ENCODE measurements at regions of chr4 and their contacts with region 1.

Region 1: DNA sequence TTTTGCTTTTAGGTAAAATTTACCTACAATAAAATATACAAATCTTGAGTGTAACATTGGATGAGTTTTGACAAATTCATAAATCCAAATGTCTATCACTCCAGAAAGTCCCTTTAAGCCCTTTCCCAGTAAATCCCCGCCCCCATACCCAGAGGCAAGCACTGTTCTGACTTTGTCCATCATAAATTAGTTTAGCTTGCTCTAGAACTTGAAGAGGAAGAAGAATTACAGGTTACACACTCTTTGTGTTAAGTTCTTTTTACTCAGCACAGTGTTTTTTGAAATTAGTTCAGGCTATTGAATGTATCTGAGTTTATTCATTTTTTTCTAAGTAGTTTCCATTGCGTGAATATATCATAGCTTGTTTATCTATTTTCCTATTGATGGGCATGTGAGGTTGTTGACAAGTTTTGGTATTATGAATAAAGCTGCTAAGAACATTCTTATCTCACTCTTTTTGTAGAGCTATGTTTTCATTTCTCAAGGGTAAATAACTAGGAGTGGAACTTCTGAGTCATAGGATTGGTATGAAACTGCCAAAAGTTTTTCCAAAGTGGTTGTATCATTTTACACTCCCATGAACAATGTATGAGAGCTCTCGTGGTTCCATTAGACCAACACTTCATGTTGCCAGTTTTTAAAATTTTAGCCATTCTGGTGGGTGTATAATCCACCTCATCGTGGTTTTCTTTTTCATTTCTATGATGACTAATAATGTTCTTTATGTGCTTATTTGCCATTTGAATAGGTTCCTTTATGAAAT is 22.4 kb upstream of the HPSE start:
- DNase-seq: peak; percentile 95
- H3K4me3 ChIP-seq: no peak overlapping the region
- H3K27ac ChIP-seq: peak overlapping the region; percentile 92
- H3K4me1 ChIP-seq: peaks cover 27% of the 10 kb centered on the region
- H3K27me3 ChIP-seq: no peaks in the 10 kb centered on the region
- CTCF ChIP-seq: no peak
- POLR2A ChIP-seq: no peak

Region 2: GRCh38 chr4:83328521-83329187 is 28.4 kb before region 1 on chr4:
- CTCF ChIA-PET with region 1: interaction called, 6 read pairs
- POLR2A ChIA-PET with region 1: interaction called, 3 read pairs
- dilution Hi-C with region 1: no loop called
- intact Hi-C with region 1: loop called (anchors 1 kb)
- DNase-seq: peak; percentile 37
- H3K4me3 ChIP-seq: peak overlapping the region in 1 of 3 experiments; percentile 10
- H3K27ac ChIP-seq: peak overlapping the region; percentile 30
- H3K4me1 ChIP-seq: peaks cover 22% of the 10 kb centered on the region
- H3K27me3 ChIP-seq: no peaks in the 10 kb centered on the region
- CTCF ChIP-seq: peak in 1 of 2 donors; percentile 10
- POLR2A ChIP-seq: no peak

Region 3: DNA sequence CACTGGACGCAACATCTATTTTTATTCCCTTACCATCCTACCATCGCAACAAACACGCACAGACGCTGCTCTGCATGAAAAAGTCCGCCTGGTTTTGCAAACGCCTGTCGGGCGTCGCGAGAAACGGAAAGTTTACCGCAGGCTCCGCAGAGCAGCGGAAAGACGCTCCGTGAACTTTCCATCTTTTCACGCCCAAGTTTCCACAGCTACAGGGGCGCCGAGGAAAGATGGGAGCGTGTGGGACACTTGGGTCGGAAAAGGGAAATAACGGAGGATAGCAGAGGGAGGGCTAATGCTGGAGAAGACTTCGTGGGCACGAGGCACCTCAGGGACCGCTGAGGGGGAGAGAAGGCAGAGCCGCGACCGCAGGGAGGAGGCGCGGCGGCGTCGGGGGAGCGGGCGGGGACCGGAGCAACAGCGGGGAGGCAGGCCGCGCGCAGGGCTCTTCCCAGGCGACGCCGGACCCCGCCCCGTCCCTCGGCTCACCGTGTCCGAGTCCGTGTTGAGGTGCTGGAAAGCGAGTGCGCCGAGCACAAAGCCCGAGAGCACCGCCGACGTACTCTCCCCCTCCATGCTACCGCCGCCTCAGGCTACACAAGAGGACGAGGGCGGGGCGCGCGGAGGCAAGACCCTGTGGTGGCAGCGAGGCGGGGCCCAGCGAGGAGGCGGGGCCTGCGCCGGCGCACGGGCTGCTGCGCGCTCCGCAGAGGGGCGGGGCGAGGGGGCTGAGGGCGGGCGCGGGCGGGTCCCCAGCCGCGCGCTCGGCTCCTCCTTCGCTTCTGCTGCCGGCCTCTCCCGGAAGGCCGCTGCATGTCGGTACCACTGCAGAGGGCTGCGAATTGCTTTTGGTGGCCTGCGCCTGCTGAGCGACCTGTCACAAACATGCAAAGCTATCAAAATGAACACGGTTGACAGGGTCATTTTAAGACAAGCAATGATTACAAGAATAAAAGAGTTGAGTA is 127.7 kb after region 1 on chr4 and contains the start of gene ABRAXAS1:
- CTCF ChIA-PET with region 1: no interaction called
- POLR2A ChIA-PET with region 1: no interaction called
- dilution Hi-C with region 1: no loop called
- intact Hi-C with region 1: loop called (anchors 1 kb)
- DNase-seq: peak; percentile 96
- H3K4me3 ChIP-seq: peak within 1 kb of the TSS; percentile 62 to 85 (median 82)
- H3K27ac ChIP-seq: peak within 1 kb of the TSS; percentile 40
- H3K4me1 ChIP-seq: peaks cover 9% of the 10 kb centered on the region
- H3K27me3 ChIP-seq: no peaks in the 10 kb centered on the region
- CTCF ChIP-seq: no peak
- POLR2A ChIP-seq: peak; percentile 91
- total RNA-seq, gene ABRAXAS1: 14.0 and 16.7 TPM in 2 replicates

Region 4: GRCh38 chr4:83546786-83547185 is 189.7 kb after region 1 on chr4:
- CTCF ChIA-PET with region 1: no interaction called
- POLR2A ChIA-PET with region 1: no interaction called
- dilution Hi-C with region 1: no loop called
- intact Hi-C with region 1: no loop called
- DNase-seq: no peak
- H3K4me3 ChIP-seq: no peak overlapping the region
- H3K27ac ChIP-seq: no peak overlapping the region
- H3K4me1 ChIP-seq: peaks cover 9% of the 10 kb centered on the region
- H3K27me3 ChIP-seq: no peaks in the 10 kb centered on the region
- CTCF ChIP-seq: no peak
- POLR2A ChIP-seq: no peak

Region 5: GRCh38 chr4:83629945-83630721 is 273.1 kb after region 1 on chr4:
- CTCF ChIA-PET with region 1: no interaction called
- POLR2A ChIA-PET with region 1: no interaction called
- dilution Hi-C with region 1: no loop called
- intact Hi-C with region 1: loop called (anchors 5 kb)
- DNase-seq: peak; percentile 92
- H3K4me3 ChIP-seq: no peak overlapping the region
- H3K27ac ChIP-seq: peak overlapping the region; percentile 57
- H3K4me1 ChIP-seq: peaks cover 20% of the 10 kb centered on the region
- H3K27me3 ChIP-seq: no peaks in the 10 kb centered on the region
- CTCF ChIP-seq: no peak
- POLR2A ChIP-seq: no peak